ENCODE measurements at regions of chr1 and their contacts with region 1.

Region 1: GRCh38 chr1:183227963-183228649 is 42.0 kb downstream of the LAMC2 start:
- DNase-seq: no peak
- H3K4me3 ChIP-seq: no peak overlapping the region
- CTCF ChIP-seq: peak; percentile 79

Region 2: DNA sequence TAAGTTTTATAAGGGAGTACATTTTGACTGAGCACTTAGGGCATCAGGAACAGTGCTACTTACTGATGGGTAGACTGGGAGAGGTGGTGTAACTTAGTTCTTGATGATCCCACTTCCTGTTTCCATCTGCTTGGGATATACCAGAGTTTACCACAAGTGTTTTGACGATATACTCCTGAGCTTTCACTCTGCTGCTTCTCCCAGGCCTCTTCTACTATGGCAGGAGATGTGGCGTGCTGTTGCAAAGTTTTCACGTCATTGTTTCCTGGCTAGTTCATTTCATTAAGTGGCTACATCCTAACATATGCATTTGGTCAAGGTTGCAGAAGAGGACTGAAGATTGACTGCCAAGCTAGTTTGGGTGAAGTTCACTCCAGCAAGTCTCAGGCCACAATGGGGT is 83.4 kb before region 1 on chr1:
- CTCF ChIA-PET with region 1: interaction called, 10 read pairs
- POLR2A ChIA-PET with region 1: no interaction called
- DNase-seq: no peak
- H3K4me3 ChIP-seq: no peak overlapping the region
- CTCF ChIP-seq: no peak

Region 3: GRCh38 chr1:183209533-183210158 is 18.5 kb before region 1 on chr1:
- CTCF ChIA-PET with region 1: interaction called, 63 read pairs
- POLR2A ChIA-PET with region 1: no interaction called
- DNase-seq: peak; percentile 47
- H3K4me3 ChIP-seq: no peak overlapping the region
- CTCF ChIP-seq: no peak

Region 4: DNA sequence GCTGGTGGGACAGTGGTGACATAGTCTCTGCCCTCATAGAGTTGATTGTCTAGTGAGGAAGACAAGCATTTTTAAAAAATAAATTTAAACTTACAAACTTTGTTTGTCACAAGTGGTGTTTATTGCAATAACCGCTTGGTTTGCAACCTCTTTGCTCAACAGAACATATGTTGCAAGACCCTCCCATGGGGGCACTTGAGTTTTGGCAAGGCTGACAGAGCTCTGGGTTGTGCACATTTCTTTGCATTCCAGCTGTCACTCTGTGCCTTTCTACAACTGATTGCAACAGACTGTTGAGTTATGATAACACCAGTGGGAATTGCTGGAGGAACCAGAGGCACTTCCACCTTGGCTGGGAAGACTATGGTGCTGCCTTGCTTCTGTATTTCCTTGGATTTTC is 16.4 kb after region 1 on chr1:
- CTCF ChIA-PET with region 1: interaction called, 24 read pairs
- POLR2A ChIA-PET with region 1: no interaction called
- DNase-seq: peak; percentile 70
- H3K4me3 ChIP-seq: no peak overlapping the region
- CTCF ChIP-seq: no peak

Measured in AG04449 (cell line).